Gastrocnemius medialis (tissue), 4 donors: ENCODE measurements at regions of chr4 and their contacts with region 1.

Region 1: DNA sequence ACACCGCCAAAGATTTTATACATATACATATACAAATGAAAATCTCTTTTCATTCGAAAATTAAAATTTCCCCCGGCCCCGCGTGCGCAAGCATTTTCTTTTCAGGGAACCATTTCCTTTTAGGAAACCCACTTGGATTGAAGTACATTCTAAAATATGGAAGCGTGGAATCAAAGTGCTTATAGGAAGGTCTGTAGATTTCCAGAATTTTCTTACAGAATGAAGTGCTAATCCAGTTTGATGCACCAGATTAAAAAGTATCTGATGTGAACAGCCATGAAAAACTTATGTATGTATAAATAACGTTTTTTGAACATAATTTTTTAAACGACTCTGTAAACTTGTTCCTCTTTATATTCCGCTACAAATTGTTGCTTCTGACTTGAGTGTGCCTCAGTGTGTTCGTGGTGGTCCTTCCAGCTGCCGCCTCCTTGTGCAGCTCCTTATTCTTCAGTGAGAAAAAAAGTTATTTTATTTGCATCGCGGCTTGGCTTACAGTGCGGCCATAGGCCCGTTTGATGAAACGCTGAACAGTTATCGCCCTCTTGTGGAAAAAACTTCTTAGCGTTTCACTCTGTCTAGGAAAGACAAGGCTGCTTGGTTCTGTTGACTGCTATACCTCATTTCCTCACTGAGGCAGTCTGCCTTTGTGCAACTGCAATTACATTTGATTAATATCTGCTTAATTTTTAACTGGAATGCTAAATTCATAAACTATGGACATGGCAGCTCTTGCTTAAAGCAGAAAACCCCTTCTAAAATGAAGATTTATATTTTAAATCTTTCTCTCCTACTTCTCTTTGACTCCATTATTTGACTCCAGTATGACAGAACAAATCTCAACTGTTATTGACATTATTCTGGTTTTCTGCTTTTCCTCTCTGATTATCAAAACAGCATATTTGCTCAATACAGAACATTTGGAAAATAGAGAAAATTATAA is 4.7 kb upstream of the NKX6-1 start:
- DNase-seq: no peak
- ATAC-seq: peak; percentile 65 to 74
- H3K4me3 ChIP-seq: no peak overlapping the region
- H3K27ac ChIP-seq: no peak overlapping the region
- H3K4me1 ChIP-seq: peaks cover 11 to 12% of the 10 kb centered on the region in 2 donors
- H3K27me3 ChIP-seq: peaks cover 85 to 91% (median 89%) of the 10 kb centered on the region in 3 donors
- CTCF ChIP-seq: peak in 3 of 5 experiments; percentile 24 to 55 (median 49)
- POLR2A ChIP-seq: no peak

Region 2: DNA sequence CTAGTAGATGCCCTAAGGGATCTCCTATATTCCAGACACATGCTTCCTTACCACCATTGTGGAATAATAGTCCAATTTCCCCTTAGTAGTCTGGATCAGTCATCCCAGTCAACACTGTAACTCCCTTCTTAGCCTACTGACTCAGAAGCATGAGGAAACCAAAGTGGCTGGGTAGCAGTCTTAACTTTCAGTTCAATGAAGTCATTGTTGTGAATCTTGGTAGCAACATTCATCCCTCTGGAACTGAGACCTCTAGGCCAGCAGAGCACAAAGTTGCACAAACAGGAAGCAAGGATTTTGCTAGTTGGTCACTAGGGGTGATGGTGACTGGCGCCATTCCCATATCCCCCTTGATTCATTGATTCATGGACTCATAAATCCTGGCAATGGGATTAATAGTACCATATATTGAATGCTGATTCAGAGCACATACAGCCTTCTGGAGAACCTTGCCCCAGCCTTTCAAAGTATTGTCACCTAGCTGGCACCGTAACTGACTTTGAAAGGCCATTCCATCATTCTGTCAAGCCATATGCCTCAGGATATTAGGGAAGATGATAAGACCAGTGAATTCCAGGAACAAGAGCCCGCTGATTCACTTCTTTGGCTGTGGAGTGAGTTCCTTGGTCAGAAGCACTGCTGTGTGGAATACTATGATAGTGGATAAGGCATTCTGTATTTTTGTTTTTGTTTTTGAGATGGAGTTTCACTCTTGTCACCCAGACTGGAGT is 987.6 kb before region 1 on chr4:
- in situ Hi-C with region 1: loop called in 3 of 4 experiments (anchors 10 to 25 kb)
- intact Hi-C with region 1: no loop called
- DNase-seq: no peak
- ATAC-seq: peak in 1 of 2 donors; percentile 33
- H3K4me3 ChIP-seq: no peak overlapping the region
- H3K27ac ChIP-seq: peak overlapping the region in 1 of 4 donors; percentile 51
- H3K4me1 ChIP-seq: no peaks in the 10 kb centered on the region
- H3K27me3 ChIP-seq: no peaks in the 10 kb centered on the region
- CTCF ChIP-seq: no peak
- POLR2A ChIP-seq: no peak

Region 3: DNA sequence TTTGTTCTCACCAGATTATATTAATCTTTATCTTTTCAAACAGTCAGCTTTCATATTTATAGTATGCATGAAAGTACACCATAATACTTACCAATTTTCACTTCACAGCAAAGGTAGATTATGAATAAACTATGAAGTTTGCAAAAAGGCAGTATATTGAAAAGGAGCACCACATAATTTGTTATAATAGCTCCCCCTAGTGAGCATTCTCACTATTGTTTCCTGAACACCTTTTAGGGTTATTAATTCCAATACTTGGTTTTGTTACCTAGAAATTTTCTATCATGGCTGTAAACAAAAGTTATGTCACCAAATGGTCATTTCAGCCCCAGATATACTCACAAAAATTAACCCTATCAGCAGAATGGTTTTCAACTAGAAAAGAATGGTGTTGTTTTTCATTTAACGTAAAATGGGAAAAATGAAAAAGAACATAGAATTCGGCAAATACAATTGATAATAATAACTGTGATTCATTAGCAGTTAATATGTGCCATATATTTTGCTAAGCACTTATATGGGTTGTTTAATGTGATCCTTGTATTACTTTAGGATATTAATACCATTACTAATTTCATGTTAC is 25.5 kb after region 1 on chr4:
- in situ Hi-C with region 1: no loop called
- intact Hi-C with region 1: no loop called
- DNase-seq: no peak
- ATAC-seq: no peak
- H3K4me3 ChIP-seq: no peak overlapping the region
- H3K27ac ChIP-seq: no peak overlapping the region
- H3K4me1 ChIP-seq: no peaks in the 10 kb centered on the region
- H3K27me3 ChIP-seq: peaks cover 0 to 4% (median 0%) of the 10 kb centered on the region in 3 donors
- CTCF ChIP-seq: peak in 3 of 5 experiments; percentile 8 to 57 (median 37)
- POLR2A ChIP-seq: no peak

Region 4: GRCh38 chr4:84778041-84778440 is 274.3 kb after region 1 on chr4:
- in situ Hi-C with region 1: no loop called
- intact Hi-C with region 1: no loop called
- DNase-seq: no peak
- ATAC-seq: no peak
- H3K4me3 ChIP-seq: no peak overlapping the region
- H3K27ac ChIP-seq: no peak overlapping the region
- H3K4me1 ChIP-seq: no peaks in the 10 kb centered on the region
- H3K27me3 ChIP-seq: no peaks in the 10 kb centered on the region
- CTCF ChIP-seq: no peak
- POLR2A ChIP-seq: no peak